Natural killer cell (primary cell): ENCODE measurements at regions of chr4 and their contacts with region 1.

Region 1: DNA sequence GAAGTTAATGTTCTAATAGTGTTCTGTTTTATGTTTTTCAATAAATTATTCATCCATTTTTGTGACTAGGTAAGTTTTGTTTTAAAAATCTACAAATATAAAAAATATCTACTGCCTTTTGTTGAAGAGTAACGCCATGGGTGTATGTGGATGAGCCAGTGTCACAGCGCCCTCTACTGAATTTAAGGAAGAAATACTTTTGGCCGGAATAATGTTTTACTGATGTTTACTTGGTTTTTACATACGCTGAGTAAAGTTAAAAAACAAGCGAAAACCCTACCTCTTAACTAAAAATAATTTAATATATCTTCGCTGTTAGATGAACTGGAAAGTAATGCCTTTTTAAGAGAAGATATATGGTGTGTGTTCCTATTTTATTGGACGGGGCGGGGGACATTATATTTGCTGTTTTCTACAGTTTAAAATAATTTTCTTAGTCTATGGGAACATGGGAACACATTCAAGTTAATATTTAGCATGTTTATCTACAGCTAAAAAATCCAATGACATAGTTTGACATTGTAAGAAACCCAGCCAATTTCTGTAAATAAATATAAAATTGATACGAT is 86.1 kb downstream of the CPE start:
- DNase-seq: peak in 1 of 2 donors; percentile 73
- ATAC-seq: peak; percentile 57 to 64 (median 64)
- H3K4me3 ChIP-seq: no peak overlapping the region
- H3K4me3 Mint-ChIP-seq: no peak overlapping the region
- H3K27ac ChIP-seq: no peak overlapping the region
- H3K27ac Mint-ChIP-seq: no peak overlapping the region
- H3K4me1 ChIP-seq: no peaks in the 10 kb centered on the region
- H3K4me1 Mint-ChIP-seq: no peaks in the 10 kb centered on the region
- H3K27me3 ChIP-seq: no peaks in the 10 kb centered on the region
- H3K27me3 Mint-ChIP-seq: no peaks in the 10 kb centered on the region
- CTCF ChIP-seq: peak; percentile 89

Region 2: GRCh38 chr4:165131247-165131832 is 333.6 kb before region 1 on chr4:
- intact Hi-C with region 1: loop called (anchors 1 kb)
- DNase-seq: peak; percentile 61 to 83
- ATAC-seq: peak; percentile 83 to 89 (median 87)
- H3K4me3 ChIP-seq: no peak overlapping the region
- H3K4me3 Mint-ChIP-seq: no peak overlapping the region
- H3K27ac ChIP-seq: no peak overlapping the region
- H3K27ac Mint-ChIP-seq: no peak overlapping the region
- H3K4me1 ChIP-seq: no peaks in the 10 kb centered on the region
- H3K4me1 Mint-ChIP-seq: peaks cover 0 to 6% of the 10 kb centered on the region in 2 donors
- H3K27me3 ChIP-seq: peaks cover 4% of the 10 kb centered on the region
- H3K27me3 Mint-ChIP-seq: peaks cover 23 to 25% of the 10 kb centered on the region in 2 donors
- CTCF ChIP-seq: peak; percentile 84

Region 3: DNA sequence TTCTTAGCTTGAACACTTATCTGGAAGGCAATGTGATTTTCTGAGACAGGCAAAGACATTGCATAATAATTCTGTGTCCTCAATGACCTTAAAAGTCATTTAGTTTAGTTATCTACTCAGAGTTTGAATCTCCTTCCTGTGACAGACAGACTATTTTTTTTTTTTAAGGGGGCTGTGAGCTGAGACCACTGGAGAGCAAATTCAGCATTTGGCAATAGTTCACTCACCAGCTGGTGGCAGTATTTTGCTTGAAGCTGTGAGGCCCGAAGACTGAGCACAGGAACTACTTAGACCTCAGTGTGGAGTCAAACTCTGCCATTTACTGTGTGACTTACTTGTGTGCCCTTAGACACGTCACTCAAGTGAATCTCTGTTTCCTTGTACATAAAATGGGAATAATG is 109.0 kb before region 1 on chr4:
- intact Hi-C with region 1: loop called (anchors 10 kb)
- DNase-seq: peak in 1 of 2 donors; percentile 24
- ATAC-seq: peak in 1 of 3 donors; percentile 36
- H3K4me3 ChIP-seq: no peak overlapping the region
- H3K4me3 Mint-ChIP-seq: no peak overlapping the region
- H3K27ac ChIP-seq: no peak overlapping the region
- H3K27ac Mint-ChIP-seq: no peak overlapping the region
- H3K4me1 ChIP-seq: no peaks in the 10 kb centered on the region
- H3K4me1 Mint-ChIP-seq: no peaks in the 10 kb centered on the region
- H3K27me3 ChIP-seq: no peaks in the 10 kb centered on the region
- H3K27me3 Mint-ChIP-seq: peaks cover 14 to 29% of the 10 kb centered on the region in 2 donors
- CTCF ChIP-seq: no peak

Region 4: GRCh38 chr4:165403637-165404036 is 61.3 kb before region 1 on chr4:
- intact Hi-C with region 1: no loop called
- DNase-seq: no peak
- ATAC-seq: no peak
- H3K4me3 ChIP-seq: no peak overlapping the region
- H3K4me3 Mint-ChIP-seq: no peak overlapping the region
- H3K27ac ChIP-seq: no peak overlapping the region
- H3K27ac Mint-ChIP-seq: no peak overlapping the region
- H3K4me1 ChIP-seq: no peaks in the 10 kb centered on the region
- H3K4me1 Mint-ChIP-seq: no peaks in the 10 kb centered on the region
- H3K27me3 ChIP-seq: no peaks in the 10 kb centered on the region
- H3K27me3 Mint-ChIP-seq: peaks cover 3 to 13% of the 10 kb centered on the region in 2 donors
- CTCF ChIP-seq: no peak